ENCODE measurements at regions of chr1 and their contacts with region 1.

Region 1: GRCh38 chr1:184296466-184297243 is 90.2 kb upstream of the C1orf21 start:
- DNase-seq: peak; percentile 96
- H3K4me3 ChIP-seq: no peak overlapping the region
- H3K27ac ChIP-seq: peak overlapping the region; percentile 63 to 71 (median 68)
- H3K4me1 ChIP-seq: peaks cover 0 to 41% (median 33%) of the 10 kb centered on the region in 4 donors
- H3K27me3 ChIP-seq: no peaks in the 10 kb centered on the region
- CTCF ChIP-seq: no peak
- EP300 ChIP-seq: no peak
- POLR2A ChIP-seq: no peak

Region 2: DNA sequence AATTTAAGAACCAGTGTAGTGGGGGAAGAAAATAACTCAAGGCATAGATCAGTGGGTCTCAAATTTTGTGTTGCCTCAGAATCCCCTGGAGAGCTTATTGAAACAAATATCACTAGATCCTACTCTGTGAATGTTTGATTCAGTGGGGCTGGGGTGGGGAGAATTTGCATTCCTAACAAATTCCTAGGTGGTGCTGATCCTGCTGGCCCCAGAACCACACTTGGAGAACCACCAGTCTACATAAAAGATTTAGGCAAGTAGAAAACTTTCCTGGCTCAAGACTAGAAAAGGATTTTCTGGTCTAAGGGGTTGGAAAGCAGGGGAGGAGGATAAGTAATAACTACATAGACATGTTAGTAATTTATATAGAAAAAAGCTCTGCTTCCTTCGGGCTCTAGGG is 56.1 kb after region 1 on chr1:
- intact Hi-C with region 1: no loop called
- DNase-seq: no peak
- H3K4me3 ChIP-seq: no peak overlapping the region
- H3K27ac ChIP-seq: no peak overlapping the region
- H3K4me1 ChIP-seq: no peaks in the 10 kb centered on the region
- H3K27me3 ChIP-seq: peaks cover 0 to 2% (median 0%) of the 10 kb centered on the region in 3 donors
- CTCF ChIP-seq: no peak
- EP300 ChIP-seq: no peak
- POLR2A ChIP-seq: no peak

Region 3: DNA sequence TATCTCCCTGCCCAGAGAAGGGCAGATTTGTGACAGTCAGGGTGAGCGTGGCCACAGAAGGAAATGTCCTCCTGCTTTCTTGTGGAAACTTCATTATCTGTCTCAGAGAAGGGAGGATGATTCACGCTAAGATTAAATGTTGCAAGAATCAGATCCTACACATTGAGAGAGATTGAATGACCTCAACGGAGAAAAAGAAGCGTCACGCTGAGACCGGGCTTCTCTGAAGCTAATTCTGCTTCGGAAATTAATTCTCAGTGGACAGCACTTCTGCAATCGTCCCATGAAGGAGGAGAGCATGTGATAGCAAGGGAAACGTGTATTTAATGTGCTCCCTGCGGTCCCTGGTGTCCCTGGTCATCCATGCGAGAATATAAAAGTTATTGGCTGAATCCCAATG is 70.3 kb after region 1 on chr1:
- intact Hi-C with region 1: loop called (anchors 5 kb)
- DNase-seq: no peak
- H3K4me3 ChIP-seq: no peak overlapping the region
- H3K27ac ChIP-seq: peak overlapping the region in 3 of 4 donors; percentile 38 to 46 (median 39)
- H3K4me1 ChIP-seq: peaks cover 0 to 26% (median 24%) of the 10 kb centered on the region in 4 donors
- H3K27me3 ChIP-seq: no peaks in the 10 kb centered on the region
- CTCF ChIP-seq: no peak
- EP300 ChIP-seq: no peak
- POLR2A ChIP-seq: no peak

Region 4: DNA sequence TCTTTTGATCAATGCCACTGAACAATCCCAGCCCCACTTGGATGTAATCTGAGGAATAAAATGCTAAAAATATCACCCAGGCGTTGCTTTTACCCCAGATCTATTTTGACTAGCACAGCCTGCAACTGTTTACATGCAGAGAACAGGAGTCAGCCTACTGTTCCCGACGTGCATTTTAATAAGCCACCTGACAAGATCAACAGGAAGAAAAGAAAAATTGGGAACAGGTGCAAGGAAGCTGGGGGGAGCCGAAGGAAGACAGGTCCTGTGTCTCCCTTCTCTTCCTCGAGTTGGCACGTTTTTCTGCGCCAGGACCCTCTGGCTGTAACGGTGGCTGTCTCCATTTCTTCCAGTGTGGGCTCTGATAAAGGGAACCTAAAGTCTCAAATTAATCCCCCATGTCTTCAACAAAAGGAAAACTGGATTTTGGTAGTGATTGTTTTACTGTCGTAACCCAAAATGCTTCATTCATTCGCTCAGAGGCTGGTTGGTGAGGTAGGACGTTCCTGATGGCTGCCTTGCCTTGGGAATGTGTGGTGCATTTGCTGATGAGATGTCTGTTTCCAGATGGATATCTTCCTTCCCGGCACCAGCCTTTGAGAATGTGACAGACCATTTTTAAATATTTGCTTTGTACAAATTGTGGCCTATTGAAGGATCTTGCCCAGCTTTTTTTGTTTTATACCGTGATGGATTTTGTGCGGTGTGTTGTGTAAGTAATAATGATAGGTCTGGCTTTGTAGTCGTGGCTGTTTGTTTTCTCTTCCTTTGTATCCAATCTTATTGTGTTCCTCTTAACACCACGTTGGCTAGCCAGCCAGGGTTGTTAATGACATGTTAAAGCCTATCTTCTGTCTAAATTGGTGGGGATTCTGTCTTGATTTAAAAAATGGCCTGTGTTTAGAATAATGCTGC is 207.6 kb after region 1 on chr1:
- intact Hi-C with region 1: no loop called
- DNase-seq: no peak
- H3K4me3 ChIP-seq: no peak overlapping the region
- H3K27ac ChIP-seq: no peak overlapping the region
- H3K4me1 ChIP-seq: peaks cover 0 to 40% (median 34%) of the 10 kb centered on the region in 4 donors
- H3K27me3 ChIP-seq: no peaks in the 10 kb centered on the region
- CTCF ChIP-seq: no peak
- EP300 ChIP-seq: no peak
- POLR2A ChIP-seq: no peak

Region 5: GRCh38 chr1:184514447-184514846 is 217.8 kb after region 1 on chr1:
- intact Hi-C with region 1: no loop called
- DNase-seq: no peak
- H3K4me3 ChIP-seq: no peak overlapping the region
- H3K27ac ChIP-seq: no peak overlapping the region
- H3K4me1 ChIP-seq: peaks cover 0 to 28% (median 13%) of the 10 kb centered on the region in 4 donors
- H3K27me3 ChIP-seq: no peaks in the 10 kb centered on the region
- CTCF ChIP-seq: no peak
- EP300 ChIP-seq: no peak
- POLR2A ChIP-seq: no peak